Activated CD8-positive, alpha-beta T cell treated with anti-CD3 and anti-CD28 coated beads for 36 hours (primary cell): ENCODE measurements at regions of chr11 and their contacts with region 1.

Region 1: GRCh38 chr11:19553683-19554333 is 158.8 kb upstream of the NAV2 start:
- DNase-seq: peak; percentile 84
- ATAC-seq: peak; percentile 60
- H3K4me3 Mint-ChIP-seq: no peak overlapping the region
- H3K27ac Mint-ChIP-seq: no peak overlapping the region
- H3K4me1 Mint-ChIP-seq: no peaks in the 10 kb centered on the region
- H3K27me3 Mint-ChIP-seq: peaks cover 6% of the 10 kb centered on the region
- CTCF ChIP-seq: peak; percentile 75

Region 2: DNA sequence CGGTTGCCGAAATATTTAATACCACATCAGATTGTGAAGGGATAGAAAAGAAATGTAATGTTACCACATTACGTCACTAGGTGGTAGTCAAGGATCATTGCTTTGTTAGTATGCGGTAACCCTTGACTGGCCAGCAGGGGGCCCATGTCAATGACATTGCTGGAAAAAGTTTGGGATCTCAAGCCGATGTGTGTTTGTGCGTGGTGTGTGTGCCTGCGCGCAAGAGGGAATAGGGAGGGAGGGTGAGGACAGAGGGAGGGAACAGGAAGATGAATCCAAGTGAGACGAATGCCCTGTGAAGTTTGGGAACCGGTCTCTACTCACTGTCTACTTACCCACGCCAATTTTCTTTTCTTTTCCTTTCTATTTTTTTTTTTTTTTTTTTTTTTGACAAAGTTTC is 482.6 kb before region 1 on chr11:
- CTCF ChIA-PET with region 1: interaction called, 50 read pairs
- POLR2A ChIA-PET with region 1: no interaction called
- intact Hi-C with region 1: loop called (anchors 5 kb)
- DNase-seq: peak; percentile 64
- ATAC-seq: peak; percentile 94
- H3K4me3 Mint-ChIP-seq: peak overlapping the region; percentile 59
- H3K27ac Mint-ChIP-seq: no peak overlapping the region
- H3K4me1 Mint-ChIP-seq: peaks cover 3% of the 10 kb centered on the region
- H3K27me3 Mint-ChIP-seq: peaks cover 28% of the 10 kb centered on the region
- CTCF ChIP-seq: peak; percentile 99

Region 3: DNA sequence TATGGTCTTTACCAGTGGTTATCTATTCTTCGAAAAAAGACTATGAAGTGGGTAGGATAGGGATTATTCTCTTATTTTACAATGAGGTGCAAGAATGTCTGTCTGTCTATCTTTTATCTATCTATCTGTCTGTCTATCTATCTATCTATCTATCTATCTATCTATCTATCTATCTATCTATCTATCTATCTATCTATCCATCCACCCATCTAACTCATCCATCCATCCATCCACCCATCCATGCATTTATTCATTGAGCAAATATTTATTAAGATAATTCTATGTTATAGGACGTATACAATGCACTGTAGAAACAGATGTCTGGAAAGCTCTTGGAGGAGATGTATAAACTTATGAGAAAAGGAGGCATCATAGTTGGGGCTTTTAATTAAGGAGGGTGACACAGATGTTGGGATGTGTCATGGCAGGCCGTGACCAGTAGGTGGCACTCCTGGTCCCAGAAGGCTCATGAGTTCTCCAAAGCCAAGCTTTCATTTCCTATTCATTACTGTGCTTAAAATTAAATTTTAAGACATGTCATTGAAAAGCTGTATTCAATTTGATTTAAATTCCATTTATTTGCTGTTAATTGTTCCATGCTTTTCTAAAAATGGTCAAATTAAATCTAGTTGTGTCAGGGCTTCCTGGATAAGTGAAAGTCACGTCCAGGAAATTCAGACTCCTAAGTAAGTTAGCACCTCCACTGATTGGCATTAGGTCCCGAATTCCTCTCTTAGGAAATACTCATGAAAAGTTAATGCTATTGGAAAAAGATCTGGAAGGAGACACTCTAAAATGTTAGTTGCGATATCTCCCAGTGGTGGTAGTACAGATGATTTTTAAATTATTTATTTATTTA is 294.1 kb before region 1 on chr11:
- CTCF ChIA-PET with region 1: interaction called, 28 read pairs
- POLR2A ChIA-PET with region 1: no interaction called
- intact Hi-C with region 1: loop called (anchors 1 kb)
- DNase-seq: peak; percentile 82
- ATAC-seq: peak; percentile 94
- H3K4me3 Mint-ChIP-seq: no peak overlapping the region
- H3K27ac Mint-ChIP-seq: no peak overlapping the region
- H3K4me1 Mint-ChIP-seq: no peaks in the 10 kb centered on the region
- H3K27me3 Mint-ChIP-seq: peaks cover 2% of the 10 kb centered on the region
- CTCF ChIP-seq: peak; percentile 89

Region 4: DNA sequence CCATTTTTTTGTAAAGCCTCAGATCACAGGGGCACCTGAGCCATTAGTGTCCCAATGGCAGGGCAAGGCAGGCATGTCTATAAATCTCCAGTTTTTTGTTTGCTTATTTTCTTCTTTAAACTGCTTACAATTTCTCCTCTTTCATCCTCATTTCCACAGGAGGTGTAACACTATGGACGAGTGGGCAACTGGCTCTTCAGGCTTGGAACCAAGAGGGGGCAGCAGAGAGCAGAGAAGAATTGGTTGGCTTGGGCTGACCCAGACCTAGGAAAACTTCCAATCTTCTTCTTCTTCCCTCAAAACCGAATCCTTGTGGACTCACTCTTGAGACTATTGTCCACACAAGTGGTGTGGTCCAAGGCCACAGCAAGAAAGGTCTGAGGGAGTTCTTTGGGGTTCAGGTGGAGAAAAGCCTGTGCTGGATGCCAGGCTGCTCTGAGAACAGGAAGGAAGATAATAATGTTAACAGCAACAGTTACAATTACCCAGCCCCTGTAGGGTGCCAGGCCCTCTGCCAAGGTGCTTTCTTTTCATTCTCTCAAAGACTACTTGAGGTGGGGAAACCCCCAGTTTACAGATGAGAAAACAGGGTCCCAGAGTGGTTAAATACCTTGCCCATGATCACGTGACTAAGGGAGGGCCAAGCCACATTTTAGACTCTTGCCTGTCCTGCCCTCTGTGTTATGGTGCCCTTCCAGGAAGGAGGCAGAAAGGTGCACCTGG is 242.3 kb before region 1 on chr11:
- CTCF ChIA-PET with region 1: interaction called, 4 read pairs
- POLR2A ChIA-PET with region 1: no interaction called
- intact Hi-C with region 1: loop called (anchors 10 kb)
- DNase-seq: peak; percentile 65
- ATAC-seq: peak; percentile 73
- H3K4me3 Mint-ChIP-seq: no peak overlapping the region
- H3K27ac Mint-ChIP-seq: no peak overlapping the region
- H3K4me1 Mint-ChIP-seq: no peaks in the 10 kb centered on the region
- H3K27me3 Mint-ChIP-seq: no peaks in the 10 kb centered on the region
- CTCF ChIP-seq: peak; percentile 73

Region 5: DNA sequence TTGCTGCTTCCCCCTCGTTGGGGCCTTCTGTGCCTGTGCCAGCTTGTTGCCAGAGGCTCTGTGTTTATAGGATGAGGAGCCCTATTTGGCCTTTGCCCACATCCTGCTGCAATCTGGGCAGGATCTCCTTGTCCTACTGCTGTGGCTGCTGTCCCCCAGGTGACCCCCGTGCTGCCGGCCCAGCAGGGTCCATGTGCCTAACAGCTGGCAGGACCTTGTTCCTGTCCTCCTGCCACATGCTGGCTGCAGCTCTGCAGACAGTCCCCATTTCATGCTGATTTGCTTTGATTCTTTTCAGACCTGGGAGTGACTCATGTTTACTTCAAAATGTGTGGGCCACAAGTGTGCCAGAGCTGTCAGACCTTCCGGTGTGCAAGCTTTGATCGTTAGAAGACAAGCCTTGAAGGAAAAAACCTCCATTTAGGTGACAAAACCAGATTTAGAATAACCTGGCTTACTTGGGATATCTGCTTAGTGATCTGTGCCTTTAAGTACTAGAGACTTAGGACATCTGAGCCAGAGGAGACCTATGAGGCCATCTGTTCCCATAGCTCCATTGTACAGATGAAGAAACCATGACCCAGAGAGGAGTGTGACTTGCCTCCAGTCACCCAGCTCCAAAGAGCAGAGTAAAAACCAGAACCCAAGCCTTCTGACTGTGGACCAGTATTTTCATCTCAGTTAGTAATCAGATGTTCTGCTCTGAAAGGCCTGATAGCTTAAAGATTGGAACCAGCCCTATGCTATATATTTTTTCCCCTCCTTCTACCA is 169.9 kb after region 1 on chr11:
- CTCF ChIA-PET with region 1: interaction called, 12 read pairs
- POLR2A ChIA-PET with region 1: no interaction called
- intact Hi-C with region 1: no loop called
- DNase-seq: peak; percentile 71
- ATAC-seq: peak; percentile 93
- H3K4me3 Mint-ChIP-seq: no peak overlapping the region
- H3K27ac Mint-ChIP-seq: peak overlapping the region; percentile 62
- H3K4me1 Mint-ChIP-seq: peaks cover 23% of the 10 kb centered on the region
- H3K27me3 Mint-ChIP-seq: no peaks in the 10 kb centered on the region
- CTCF ChIP-seq: no peak

Region 6: GRCh38 chr11:19742588-19743292 is 188.9 kb after region 1 on chr11:
- CTCF ChIA-PET with region 1: interaction called, 34 read pairs
- POLR2A ChIA-PET with region 1: no interaction called
- intact Hi-C with region 1: no loop called
- DNase-seq: peak; percentile 77
- ATAC-seq: peak; percentile 84
- H3K4me3 Mint-ChIP-seq: no peak overlapping the region
- H3K27ac Mint-ChIP-seq: no peak overlapping the region
- H3K4me1 Mint-ChIP-seq: no peaks in the 10 kb centered on the region
- H3K27me3 Mint-ChIP-seq: peaks cover 6% of the 10 kb centered on the region
- CTCF ChIP-seq: peak; percentile 72

Region 7: DNA sequence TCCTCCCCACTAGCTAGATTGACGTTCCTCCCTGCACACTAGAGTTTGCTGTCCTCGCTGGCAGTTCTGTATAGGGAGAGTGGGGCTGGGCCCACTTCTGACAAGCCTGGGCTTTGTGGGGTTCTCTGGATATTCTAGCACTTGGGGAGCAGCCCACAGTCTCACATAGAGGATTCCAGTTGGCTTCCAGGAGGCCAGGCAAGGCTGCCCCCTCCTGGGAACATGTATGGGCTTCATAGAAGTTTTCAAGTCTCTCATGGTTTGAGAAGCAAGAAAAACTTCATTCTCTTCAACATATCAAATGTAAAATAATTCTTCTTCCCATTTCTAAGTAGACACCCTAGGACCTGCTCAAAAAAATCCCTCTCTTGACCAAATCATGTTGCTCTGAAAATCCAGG is 246.4 kb after region 1 on chr11:
- CTCF ChIA-PET with region 1: no interaction called
- POLR2A ChIA-PET with region 1: no interaction called
- intact Hi-C with region 1: loop called (anchors 10 kb)
- DNase-seq: peak; percentile 3
- ATAC-seq: no peak
- H3K4me3 Mint-ChIP-seq: no peak overlapping the region
- H3K27ac Mint-ChIP-seq: no peak overlapping the region
- H3K4me1 Mint-ChIP-seq: no peaks in the 10 kb centered on the region
- H3K27me3 Mint-ChIP-seq: no peaks in the 10 kb centered on the region
- CTCF ChIP-seq: no peak